Activated naive CD4-positive, alpha-beta T cell treated with anti-CD3 and anti-CD28 coated beads, Interleukin-2, amount 10 ng/mL, durations not matched to agents 7 days and 5 days (primary cell): ENCODE measurements at regions of chr12 and their contacts with region 1.

Region 1: GRCh38 chr12:49553512-49554088 is 14.3 kb downstream of the MCRS1 start:
- DNase-seq: peak; percentile 41
- H3K4me3 Mint-ChIP-seq: no peak overlapping the region
- H3K27ac Mint-ChIP-seq: no peak overlapping the region
- H3K4me1 Mint-ChIP-seq: peaks cover 11% of the 10 kb centered on the region
- H3K27me3 Mint-ChIP-seq: peaks cover 42% of the 10 kb centered on the region

Region 2: GRCh38 chr12:49567611-49568441 is 14.2 kb after region 1 on chr12 and contains the start of gene MCRS1:
- CTCF ChIA-PET with region 1: interaction called, 42 read pairs
- DNase-seq: peak; percentile 93
- H3K4me3 Mint-ChIP-seq: peak within 1 kb of the TSS; percentile 96
- H3K27ac Mint-ChIP-seq: peak within 1 kb of the TSS; percentile 96
- H3K4me1 Mint-ChIP-seq: peaks cover 62% of the 10 kb centered on the region
- H3K27me3 Mint-ChIP-seq: no peaks in the 10 kb centered on the region

Region 3: GRCh38 chr12:49580572-49581535 is 27.3 kb after region 1 on chr12:
- CTCF ChIA-PET with region 1: interaction called, 71 read pairs
- DNase-seq: peak; percentile 78
- H3K4me3 Mint-ChIP-seq: no peak overlapping the region
- H3K27ac Mint-ChIP-seq: no peak overlapping the region
- H3K4me1 Mint-ChIP-seq: peaks cover 15% of the 10 kb centered on the region
- H3K27me3 Mint-ChIP-seq: no peaks in the 10 kb centered on the region

Region 4: GRCh38 chr12:49623142-49623904 is 69.7 kb after region 1 on chr12 and contains the start of gene PRPF40B:
- CTCF ChIA-PET with region 1: interaction called, 11 read pairs
- DNase-seq: peak; percentile 89
- H3K4me3 Mint-ChIP-seq: peak within 1 kb of the TSS; percentile 81
- H3K27ac Mint-ChIP-seq: peak within 1 kb of the TSS; percentile 93
- H3K4me1 Mint-ChIP-seq: peaks cover 31% of the 10 kb centered on the region
- H3K27me3 Mint-ChIP-seq: peaks cover 48% of the 10 kb centered on the region